ENCODE measurements at regions of chr2 and their contacts with region 1.

Region 1: DNA sequence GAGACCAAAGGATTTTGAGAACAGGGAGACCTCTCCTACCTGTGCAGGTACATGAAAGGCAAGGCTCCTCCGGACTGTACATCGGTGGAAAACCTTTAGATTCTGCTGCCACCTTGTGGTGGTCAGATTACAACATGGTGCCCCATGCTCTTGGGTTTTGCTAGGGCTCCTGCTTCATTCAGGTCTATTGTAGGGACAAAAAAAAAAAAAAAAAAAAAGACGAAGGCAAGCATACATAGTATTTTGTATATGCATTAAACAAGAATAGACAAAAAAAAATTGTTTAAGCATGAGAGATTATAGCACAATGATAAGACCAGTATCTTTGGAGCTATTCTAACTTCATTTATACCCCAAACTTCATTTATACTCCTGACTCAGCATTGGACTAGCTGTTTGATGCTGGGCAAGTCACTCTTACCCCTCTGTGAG is 27.4 kb upstream of the SPR start:
- DNase-seq: peak; percentile 26 to 93 (median 78)

Region 2: GRCh38 chr2:72770879-72771461 is 88.9 kb before region 1 on chr2:
- intact Hi-C with region 1: loop called (anchors 2 kb)
- DNase-seq: peak in 32 of 42 donors; percentile 20 to 93 (median 76)

Region 3: DNA sequence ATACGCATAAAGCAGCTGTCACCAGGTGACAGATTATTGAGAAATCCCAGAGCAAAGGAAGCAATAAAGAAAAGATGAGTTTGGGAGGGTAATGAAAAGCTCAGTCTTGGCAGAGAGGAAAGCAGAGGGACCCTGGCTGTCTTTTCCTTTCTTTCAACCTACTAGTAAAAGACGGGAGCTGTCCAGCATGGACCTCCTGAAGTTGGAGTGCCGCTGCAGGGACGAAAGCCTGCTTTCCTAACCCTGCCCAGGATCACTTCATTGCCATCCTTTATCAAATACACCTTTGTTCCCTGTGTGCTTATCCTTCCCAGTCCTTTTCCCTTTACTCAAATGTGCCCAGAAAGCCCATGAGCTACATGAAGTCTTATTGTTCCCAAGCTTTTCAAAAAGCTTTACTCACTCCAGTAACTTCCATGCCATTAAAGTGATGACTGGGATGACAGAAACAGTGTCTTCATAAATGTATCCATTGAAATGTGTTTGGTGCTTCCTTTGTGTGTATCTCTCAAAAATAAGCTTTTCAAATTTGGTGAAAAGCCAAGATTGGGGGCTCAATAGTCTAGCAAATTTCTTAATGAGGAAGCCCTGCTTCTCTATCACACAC is 23.6 kb after region 1 on chr2:
- intact Hi-C with region 1: no loop called
- DNase-seq: peak in 1 of 42 donors; percentile 61

Region 4: GRCh38 chr2:73085691-73086360 is 226.0 kb after region 1 on chr2:
- intact Hi-C with region 1: no loop called
- DNase-seq: peak; percentile 82 to 96 (median 90)

Measured in head of caudate nucleus (tissue), 42 donors.